ENCODE measurements at regions of chr1 and their contacts with region 1.

Region 1: DNA sequence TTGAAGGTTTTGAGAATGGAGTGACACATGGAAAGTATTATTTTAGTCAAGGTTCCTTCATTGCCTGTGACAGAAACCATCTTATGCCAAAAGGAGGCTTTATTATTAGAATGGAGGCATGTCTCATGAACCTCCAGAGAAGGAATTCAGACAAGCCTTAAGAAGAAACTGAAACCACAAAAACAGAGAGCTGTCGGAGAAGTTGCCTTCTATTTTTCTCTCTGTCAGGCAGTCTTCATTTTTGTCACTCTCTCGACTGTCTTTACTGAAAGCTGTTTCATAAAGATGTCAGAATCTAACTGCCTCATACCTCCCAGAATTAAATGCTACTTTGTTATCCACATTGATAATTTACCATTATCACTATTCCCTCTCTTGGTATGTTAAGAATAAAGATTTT is 434.7 kb upstream of the ADGRL4 start:
- DNase-seq: no peak
- H3K4me3 ChIP-seq: no peak overlapping the region
- H3K27ac ChIP-seq: no peak overlapping the region
- H3K4me1 ChIP-seq: no peaks in the 10 kb centered on the region
- H3K27me3 ChIP-seq: no peaks in the 10 kb centered on the region
- CTCF ChIP-seq: no peak
- POLR2A ChIP-seq: no peak

Region 2: DNA sequence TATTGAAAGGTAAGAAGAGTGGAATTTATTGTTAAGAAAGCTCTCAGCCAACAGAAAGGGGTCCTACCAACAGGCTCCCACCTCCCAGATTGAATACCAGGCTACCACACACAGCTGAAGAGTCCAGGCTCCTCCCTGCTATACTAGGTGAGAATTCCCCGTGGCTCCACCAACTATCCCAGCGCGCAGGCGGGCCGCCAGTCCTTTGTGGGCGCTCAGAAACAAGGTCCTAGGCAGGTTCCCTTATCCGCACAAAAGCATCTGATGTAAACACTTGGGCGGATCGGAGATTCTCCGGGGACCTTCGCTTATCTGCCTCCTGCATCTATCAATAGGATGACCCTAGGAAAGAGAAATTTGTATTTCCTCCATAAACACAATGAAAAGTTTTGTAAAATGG is 10.8 kb before region 1 on chr1:
- intact Hi-C with region 1: loop called (anchors 1 kb)
- DNase-seq: no peak
- H3K4me3 ChIP-seq: no peak overlapping the region
- H3K27ac ChIP-seq: no peak overlapping the region
- H3K4me1 ChIP-seq: no peaks in the 10 kb centered on the region
- H3K27me3 ChIP-seq: no peaks in the 10 kb centered on the region
- CTCF ChIP-seq: no peak
- POLR2A ChIP-seq: no peak

Region 3: GRCh38 chr1:79457562-79458224 is 16.5 kb after region 1 on chr1:
- intact Hi-C with region 1: no loop called
- DNase-seq: no peak
- H3K4me3 ChIP-seq: no peak overlapping the region
- H3K27ac ChIP-seq: no peak overlapping the region
- H3K4me1 ChIP-seq: no peaks in the 10 kb centered on the region
- H3K27me3 ChIP-seq: no peaks in the 10 kb centered on the region
- CTCF ChIP-seq: no peak
- POLR2A ChIP-seq: no peak

Measured in breast epithelium (tissue), 4 donors.